ENCODE measurements at regions of chr14 and their contacts with region 1.

Region 1: GRCh38 chr14:87944987-87945604 is 47.9 kb downstream of the GALC start:
- DNase-seq: peak in 5 of 14 experiments; percentile 4 to 80 (median 68)
- ATAC-seq: peak; percentile 43
- H3K4me3 ChIP-seq: no peak overlapping the region
- H3K4me3 Mint-ChIP-seq: no peak overlapping the region
- H3K27ac ChIP-seq: no peak overlapping the region
- H3K27ac Mint-ChIP-seq: no peak overlapping the region
- H3K4me1 ChIP-seq: no peaks in the 10 kb centered on the region
- H3K4me1 Mint-ChIP-seq: peaks cover 8% of the 10 kb centered on the region
- H3K27me3 ChIP-seq: no peaks in the 10 kb centered on the region
- H3K27me3 Mint-ChIP-seq: no peaks in the 10 kb centered on the region
- CTCF ChIP-seq: peak; percentile 83

Region 2: DNA sequence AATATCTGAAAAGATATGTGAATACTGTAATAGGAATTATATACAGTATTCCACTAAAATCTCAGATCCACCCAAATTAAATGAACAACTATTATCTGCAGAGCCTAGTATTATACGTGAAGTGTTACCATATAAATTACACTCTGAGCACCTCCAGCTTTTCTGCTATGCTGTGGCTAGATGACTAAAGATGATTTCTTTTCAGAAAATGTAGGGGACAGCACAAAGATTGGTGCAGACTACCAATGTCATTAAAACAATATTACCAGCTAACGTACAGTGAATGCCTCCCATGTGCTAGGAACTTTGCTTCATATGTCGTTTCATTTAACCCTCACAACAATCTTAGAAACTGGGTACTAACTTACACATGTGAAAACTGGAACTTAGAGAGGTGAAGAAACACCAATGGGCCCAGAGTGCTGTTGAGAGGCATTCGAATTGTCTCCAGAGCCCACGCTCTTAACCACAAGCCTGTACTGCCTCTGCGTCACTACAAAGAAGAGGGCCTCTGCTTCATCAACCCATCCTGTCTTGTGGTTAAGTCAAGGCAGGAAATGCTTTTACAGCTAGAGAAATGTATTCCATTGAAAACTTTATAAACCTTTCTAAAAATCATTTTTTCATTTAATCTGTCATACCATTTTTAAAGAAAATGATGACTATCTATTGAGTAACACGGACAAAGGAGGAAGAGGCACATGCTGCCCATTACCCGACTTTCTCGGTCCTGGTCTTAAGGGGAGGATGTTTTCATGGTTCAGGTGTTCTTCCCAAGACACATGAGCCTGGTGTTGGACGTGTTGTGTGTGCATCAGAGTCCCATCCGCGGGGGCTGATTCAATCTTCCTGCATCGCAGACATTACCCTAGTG is 61.1 kb after region 1 on chr14:
- CTCF ChIA-PET with region 1: no interaction called
- POLR2A ChIA-PET with region 1: interaction called, 10 read pairs
- intact Hi-C with region 1: loop called in 1 of 2 experiments (anchors 5 kb)
- DNase-seq: peak; percentile 43 to 93 (median 52)
- ATAC-seq: peak; percentile 90
- H3K4me3 ChIP-seq: peak overlapping the region; percentile 61
- H3K4me3 Mint-ChIP-seq: peak overlapping the region; percentile 93
- H3K27ac ChIP-seq: peak overlapping the region; percentile 74 to 82
- H3K27ac Mint-ChIP-seq: peak overlapping the region; percentile 97
- H3K4me1 ChIP-seq: peaks cover 25% of the 10 kb centered on the region
- H3K4me1 Mint-ChIP-seq: peaks cover 84% of the 10 kb centered on the region
- H3K27me3 ChIP-seq: no peaks in the 10 kb centered on the region
- H3K27me3 Mint-ChIP-seq: no peaks in the 10 kb centered on the region
- CTCF ChIP-seq: no peak

Region 3: GRCh38 chr14:88168498-88169165 is 223.5 kb after region 1 on chr14:
- CTCF ChIA-PET with region 1: interaction called, 47 read pairs
- POLR2A ChIA-PET with region 1: interaction called, 3 read pairs
- intact Hi-C with region 1: loop called (anchors 1 kb)
- DNase-seq: peak; percentile 30 to 80 (median 45)
- ATAC-seq: peak; percentile 98
- H3K4me3 ChIP-seq: no peak overlapping the region
- H3K4me3 Mint-ChIP-seq: no peak overlapping the region
- H3K27ac ChIP-seq: no peak overlapping the region
- H3K27ac Mint-ChIP-seq: no peak overlapping the region
- H3K4me1 ChIP-seq: peaks cover 6% of the 10 kb centered on the region
- H3K4me1 Mint-ChIP-seq: no peaks in the 10 kb centered on the region
- H3K27me3 ChIP-seq: peaks cover 0 to 10% of the 10 kb centered on the region in 2 experiments
- H3K27me3 Mint-ChIP-seq: peaks cover 23% of the 10 kb centered on the region
- CTCF ChIP-seq: peak; percentile 76

Region 4: DNA sequence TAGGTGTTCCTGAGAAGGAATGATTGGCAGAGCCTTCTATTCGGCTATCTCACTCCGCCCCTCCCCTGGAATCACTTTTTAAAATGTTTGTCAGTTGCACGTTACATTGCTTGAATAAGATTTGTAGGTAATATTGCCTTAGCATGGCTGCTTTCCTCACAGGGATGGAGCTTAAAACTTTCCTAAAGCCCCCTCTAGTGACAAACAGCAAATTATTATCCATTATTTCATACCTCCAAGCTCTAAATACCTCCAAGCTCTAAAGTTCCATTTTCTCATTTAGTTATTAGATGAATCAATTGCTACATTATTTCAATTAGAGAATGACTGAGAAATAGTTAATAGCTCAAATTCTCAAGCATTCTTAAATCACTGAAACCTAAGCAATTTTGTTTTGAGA is 435.3 kb after region 1 on chr14:
- CTCF ChIA-PET with region 1: no interaction called
- POLR2A ChIA-PET with region 1: no interaction called
- intact Hi-C with region 1: loop called in 1 of 2 experiments (anchors 5 kb)
- DNase-seq: no peak
- ATAC-seq: no peak
- H3K4me3 ChIP-seq: no peak overlapping the region
- H3K4me3 Mint-ChIP-seq: no peak overlapping the region
- H3K27ac ChIP-seq: no peak overlapping the region
- H3K27ac Mint-ChIP-seq: no peak overlapping the region
- H3K4me1 ChIP-seq: no peaks in the 10 kb centered on the region
- H3K4me1 Mint-ChIP-seq: peaks cover 13% of the 10 kb centered on the region
- H3K27me3 ChIP-seq: no peaks in the 10 kb centered on the region
- H3K27me3 Mint-ChIP-seq: no peaks in the 10 kb centered on the region
- CTCF ChIP-seq: no peak

Region 5: GRCh38 chr14:88551094-88551870 is 606.2 kb after region 1 on chr14:
- CTCF ChIA-PET with region 1: no interaction called
- POLR2A ChIA-PET with region 1: no interaction called
- intact Hi-C with region 1: loop called in 1 of 2 experiments (anchors 10 kb)
- DNase-seq: peak in 12 of 14 experiments; percentile 7 to 60 (median 34)
- ATAC-seq: peak; percentile 26
- H3K4me3 ChIP-seq: peak overlapping the region; percentile 57
- H3K4me3 Mint-ChIP-seq: peak overlapping the region; percentile 71
- H3K27ac ChIP-seq: no peak overlapping the region
- H3K27ac Mint-ChIP-seq: no peak overlapping the region
- H3K4me1 ChIP-seq: peaks cover 21% of the 10 kb centered on the region
- H3K4me1 Mint-ChIP-seq: peaks cover 31% of the 10 kb centered on the region
- H3K27me3 ChIP-seq: peaks cover 29 to 50% of the 10 kb centered on the region in 2 experiments
- H3K27me3 Mint-ChIP-seq: peaks cover 69% of the 10 kb centered on the region
- CTCF ChIP-seq: no peak